B cell (primary cell): ENCODE measurements at regions of chr4 and their contacts with region 1.

Region 1: DNA sequence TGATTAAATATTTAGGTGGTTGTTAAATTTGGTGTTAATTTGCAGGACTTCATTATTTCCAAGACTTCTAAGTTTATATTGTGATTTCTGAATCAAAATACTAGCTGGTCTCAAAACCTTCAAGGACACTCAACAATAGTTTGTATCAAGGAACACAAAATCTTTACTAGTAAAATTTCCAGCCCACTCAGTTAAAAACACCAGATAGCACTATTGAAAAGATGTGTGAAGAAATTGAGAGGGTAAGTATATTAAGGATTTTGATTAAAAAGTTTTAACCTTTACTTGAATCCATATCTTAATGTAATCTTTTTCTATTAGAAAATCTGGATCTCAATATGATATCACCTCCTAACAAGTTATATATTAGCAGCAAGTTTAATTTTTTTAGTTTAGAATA is 89.3 kb upstream of the UGT8 start:
- DNase-seq: peak; percentile 4
- ATAC-seq: no peak
- H3K4me3 ChIP-seq: no peak overlapping the region
- H3K4me3 Mint-ChIP-seq: no peak overlapping the region
- H3K27ac ChIP-seq: no peak overlapping the region
- H3K27ac Mint-ChIP-seq: no peak overlapping the region
- H3K4me1 ChIP-seq: no peaks in the 10 kb centered on the region
- H3K4me1 Mint-ChIP-seq: no peaks in the 10 kb centered on the region
- H3K27me3 ChIP-seq: peaks cover 0 to 9% (median 3%) of the 10 kb centered on the region in 4 experiments
- H3K27me3 Mint-ChIP-seq: peaks cover 30% of the 10 kb centered on the region
- CTCF ChIP-seq: peak; percentile 15

Region 2: GRCh38 chr4:113996599-113997177 is 512.7 kb before region 1 on chr4:
- CTCF ChIA-PET with region 1: no interaction called
- POLR2A ChIA-PET with region 1: no interaction called
- intact Hi-C with region 1: no loop called
- DNase-seq: no peak
- ATAC-seq: no peak
- H3K4me3 ChIP-seq: no peak overlapping the region
- H3K4me3 Mint-ChIP-seq: no peak overlapping the region
- H3K27ac ChIP-seq: no peak overlapping the region
- H3K27ac Mint-ChIP-seq: no peak overlapping the region
- H3K4me1 ChIP-seq: no peaks in the 10 kb centered on the region
- H3K4me1 Mint-ChIP-seq: no peaks in the 10 kb centered on the region
- H3K27me3 ChIP-seq: no peaks in the 10 kb centered on the region
- H3K27me3 Mint-ChIP-seq: no peaks in the 10 kb centered on the region
- CTCF ChIP-seq: no peak

Region 3: GRCh38 chr4:114535725-114536124 is 26.4 kb after region 1 on chr4:
- CTCF ChIA-PET with region 1: no interaction called
- POLR2A ChIA-PET with region 1: no interaction called
- intact Hi-C with region 1: no loop called
- DNase-seq: no peak
- ATAC-seq: no peak
- H3K4me3 ChIP-seq: no peak overlapping the region
- H3K4me3 Mint-ChIP-seq: no peak overlapping the region
- H3K27ac ChIP-seq: no peak overlapping the region
- H3K27ac Mint-ChIP-seq: no peak overlapping the region
- H3K4me1 ChIP-seq: no peaks in the 10 kb centered on the region
- H3K4me1 Mint-ChIP-seq: no peaks in the 10 kb centered on the region
- H3K27me3 ChIP-seq: no peaks in the 10 kb centered on the region
- H3K27me3 Mint-ChIP-seq: peaks cover 2% of the 10 kb centered on the region
- CTCF ChIP-seq: no peak

Region 4: GRCh38 chr4:114694770-114695169 is 185.4 kb after region 1 on chr4:
- CTCF ChIA-PET with region 1: interaction called, 11 read pairs
- POLR2A ChIA-PET with region 1: no interaction called
- intact Hi-C with region 1: no loop called
- DNase-seq: peak; percentile 54
- ATAC-seq: no peak
- H3K4me3 ChIP-seq: no peak overlapping the region
- H3K4me3 Mint-ChIP-seq: no peak overlapping the region
- H3K27ac ChIP-seq: no peak overlapping the region
- H3K27ac Mint-ChIP-seq: no peak overlapping the region
- H3K4me1 ChIP-seq: peaks cover 0 to 6% of the 10 kb centered on the region in 2 donors
- H3K4me1 Mint-ChIP-seq: peaks cover 15% of the 10 kb centered on the region
- H3K27me3 ChIP-seq: no peaks in the 10 kb centered on the region
- H3K27me3 Mint-ChIP-seq: no peaks in the 10 kb centered on the region
- CTCF ChIP-seq: peak; percentile 86